K562 (cell line): ENCODE measurements at regions of chr7 and their contacts with region 1.

Region 1: DNA sequence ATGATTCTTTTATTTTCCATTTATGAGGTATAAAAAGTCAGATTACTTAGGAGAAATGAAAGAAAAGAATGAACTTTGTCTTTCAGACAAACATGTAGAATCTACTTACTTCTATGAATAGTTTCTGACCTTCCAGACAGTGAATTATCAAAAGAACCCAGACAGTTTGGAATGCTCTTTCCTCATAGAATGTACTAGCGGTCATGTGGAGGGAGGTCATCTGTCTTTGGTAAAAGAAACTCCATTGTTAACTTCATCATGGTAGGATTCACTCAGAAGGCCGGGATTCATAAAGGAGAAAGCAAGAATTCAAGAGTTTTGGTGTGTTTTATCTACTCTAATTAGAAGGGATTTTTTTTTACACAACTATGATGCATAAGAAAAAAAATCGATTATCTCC is 144.8 kb upstream of the ZNF804B start:
- DNase-seq: no peak
- ATAC-seq: no peak
- H3K4me3 ChIP-seq: no peak overlapping the region
- H3K27ac ChIP-seq: no peak overlapping the region
- H3K4me1 ChIP-seq: no peaks in the 10 kb centered on the region
- H3K27me3 ChIP-seq: no peaks in the 10 kb centered on the region
- CTCF ChIP-seq: no peak
- EP300 ChIP-seq: no peak
- POLR2A ChIP-seq: no peak
- RAD21 ChIP-seq: no peak

Region 2: DNA sequence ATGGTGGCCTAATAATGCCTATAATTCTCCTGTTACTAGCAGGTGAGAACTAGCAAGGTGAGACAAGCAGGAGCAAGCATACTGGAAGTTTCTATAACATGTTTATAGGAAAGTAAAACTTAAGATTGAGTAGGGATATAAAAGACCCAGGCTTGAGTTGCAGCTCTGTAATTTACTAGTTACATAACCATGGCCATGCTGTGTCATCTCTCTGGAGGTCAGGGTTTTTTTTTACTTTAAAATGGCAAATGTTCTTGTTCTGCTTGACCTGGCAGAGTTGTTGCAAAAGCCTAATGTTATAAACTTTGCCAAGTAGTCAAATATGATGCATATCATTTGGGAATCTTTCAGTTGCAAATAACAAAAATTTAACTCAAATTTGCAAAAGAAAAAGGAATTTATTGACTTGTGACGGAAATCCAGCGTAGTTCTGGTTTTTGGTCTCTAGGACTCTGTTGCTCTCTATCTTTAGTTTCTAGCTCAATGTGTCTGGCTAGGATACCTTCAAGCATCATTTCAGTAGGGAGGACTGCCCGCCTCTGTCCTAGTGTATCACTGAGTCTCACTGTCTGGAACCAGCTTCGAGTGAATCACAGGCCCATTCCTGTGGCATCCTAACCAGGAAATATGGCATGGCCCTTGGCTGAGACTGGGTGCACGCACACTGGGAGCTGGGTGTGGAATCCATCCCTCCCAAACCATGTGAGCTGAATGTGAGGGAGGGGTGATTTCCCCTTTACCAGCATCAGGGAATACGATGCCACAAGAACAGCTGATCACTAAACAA is 612.8 kb before region 1 on chr7:
- CTCF ChIA-PET with region 1: no interaction called
- POLR2A ChIA-PET with region 1: no interaction called
- in situ Hi-C with region 1: no loop called
- intact Hi-C with region 1: no loop called
- DNase-seq: no peak
- ATAC-seq: no peak
- H3K4me3 ChIP-seq: no peak overlapping the region
- H3K27ac ChIP-seq: no peak overlapping the region
- H3K4me1 ChIP-seq: no peaks in the 10 kb centered on the region
- H3K27me3 ChIP-seq: no peaks in the 10 kb centered on the region
- CTCF ChIP-seq: no peak
- EP300 ChIP-seq: no peak
- POLR2A ChIP-seq: no peak
- RAD21 ChIP-seq: no peak

Region 3: DNA sequence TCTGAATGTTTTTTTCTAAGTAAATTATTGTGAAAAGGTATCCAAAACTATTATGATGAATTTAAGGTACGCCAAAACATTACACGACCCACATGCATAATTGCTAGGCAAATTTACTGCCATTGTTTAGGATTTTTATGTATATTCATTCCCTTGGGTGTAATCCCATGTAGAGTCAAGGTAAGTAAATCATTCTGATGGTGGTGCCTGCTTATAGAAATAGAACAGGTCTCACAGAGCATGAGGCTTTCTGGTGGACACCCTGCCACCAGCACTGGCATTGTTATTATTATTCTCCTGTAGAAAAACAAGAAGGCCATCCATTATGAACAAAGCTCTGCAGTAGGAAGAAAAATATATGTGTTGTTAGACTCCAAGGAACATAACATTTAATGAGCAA is 33.1 kb after region 1 on chr7:
- CTCF ChIA-PET with region 1: no interaction called
- POLR2A ChIA-PET with region 1: no interaction called
- in situ Hi-C with region 1: loop called (anchors 5 kb)
- intact Hi-C with region 1: no loop called
- DNase-seq: no peak
- ATAC-seq: no peak
- H3K4me3 ChIP-seq: no peak overlapping the region
- H3K27ac ChIP-seq: no peak overlapping the region
- H3K4me1 ChIP-seq: no peaks in the 10 kb centered on the region
- H3K27me3 ChIP-seq: no peaks in the 10 kb centered on the region
- CTCF ChIP-seq: no peak
- EP300 ChIP-seq: no peak
- POLR2A ChIP-seq: no peak
- RAD21 ChIP-seq: no peak